Heart right ventricle (tissue), 16 donors: ENCODE measurements at regions of chr7 and their contacts with region 1.

Region 1: DNA sequence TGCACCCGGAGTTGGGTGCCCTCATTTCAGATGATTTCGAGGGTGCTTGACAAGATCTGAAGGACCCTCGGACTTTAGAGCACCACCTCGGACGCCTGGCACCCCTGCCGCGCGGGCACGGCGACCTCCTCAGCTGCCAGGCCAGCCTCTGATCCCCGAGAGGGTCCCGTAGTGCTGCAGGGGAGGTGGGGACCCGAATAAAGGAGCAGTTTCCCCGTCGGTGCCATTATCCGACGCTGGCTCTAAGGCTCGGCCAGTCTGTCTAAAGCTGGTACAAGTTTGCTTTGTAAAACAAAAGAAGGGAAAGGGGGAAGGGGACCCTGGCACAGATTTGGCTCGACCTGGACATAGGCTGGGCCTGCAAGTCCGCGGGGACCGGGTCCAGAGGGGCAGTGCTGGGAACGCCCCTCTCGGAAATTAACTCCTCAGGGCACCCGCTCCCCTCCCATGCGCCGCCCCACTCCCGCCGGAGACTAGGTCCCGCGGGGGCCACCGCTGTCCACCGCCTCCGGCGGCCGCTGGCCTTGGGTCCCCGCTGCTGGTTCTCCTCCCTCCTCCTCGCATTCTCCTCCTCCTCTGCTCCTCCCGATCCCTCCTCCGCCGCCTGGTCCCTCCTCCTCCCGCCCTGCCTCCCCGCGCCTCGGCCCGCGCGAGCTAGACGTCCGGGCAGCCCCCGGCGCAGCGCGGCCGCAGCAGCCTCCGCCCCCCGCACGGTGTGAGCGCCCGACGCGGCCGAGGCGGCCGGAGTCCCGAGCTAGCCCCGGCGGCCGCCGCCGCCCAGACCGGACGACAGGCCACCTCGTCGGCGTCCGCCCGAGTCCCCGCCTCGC is at the start of gene EGFR:
- DNase-seq: peak; percentile 81 to 84
- ATAC-seq: peak; percentile 82 to 92 (median 86)
- H3K4me3 ChIP-seq: peak within 1 kb of the TSS; percentile 64 to 95 (median 76)
- H3K27ac ChIP-seq: peak within 1 kb of the TSS; percentile 83 to 98 (median 94)
- H3K4me1 ChIP-seq: peaks cover 0 to 17% (median 8%) of the 10 kb centered on the region in 9 donors
- H3K27me3 ChIP-seq: peaks cover 0 to 44% (median 24%) of the 10 kb centered on the region in 7 donors
- CTCF ChIP-seq: no peak
- total RNA-seq, gene EGFR: 5.0 to 13.5 (median 9.2) TPM

Region 2: GRCh38 chr7:54728411-54728810 is 290.2 kb before region 1 on chr7:
- intact Hi-C with region 1: no loop called
- DNase-seq: no peak
- ATAC-seq: no peak
- H3K4me3 ChIP-seq: no peak overlapping the region
- H3K27ac ChIP-seq: no peak overlapping the region
- H3K4me1 ChIP-seq: no peaks in the 10 kb centered on the region
- H3K27me3 ChIP-seq: peaks cover 0 to 3% (median 0%) of the 10 kb centered on the region in 7 donors
- CTCF ChIP-seq: no peak

Region 3: GRCh38 chr7:54788664-54789063 is 229.9 kb before region 1 on chr7:
- intact Hi-C with region 1: loop called in 5 of 10 experiments (anchors 5 to 10 kb)
- DNase-seq: peak in 1 of 2 donors; percentile 36
- ATAC-seq: peak; percentile 67 to 93 (median 78)
- H3K4me3 ChIP-seq: no peak overlapping the region
- H3K27ac ChIP-seq: no peak overlapping the region
- H3K4me1 ChIP-seq: peaks cover 0 to 9% (median 6%) of the 10 kb centered on the region in 9 donors
- H3K27me3 ChIP-seq: peaks cover 0 to 7% (median 0%) of the 10 kb centered on the region in 7 donors
- CTCF ChIP-seq: peak; percentile 31 to 83 (median 67)

Region 4: GRCh38 chr7:55048221-55048859 is 29.8 kb after region 1 on chr7:
- intact Hi-C with region 1: no loop called
- DNase-seq: no peak
- ATAC-seq: peak in 5 of 8 donors; percentile 30 to 87 (median 51)
- H3K4me3 ChIP-seq: no peak overlapping the region
- H3K27ac ChIP-seq: no peak overlapping the region
- H3K4me1 ChIP-seq: peaks cover 0 to 40% (median 16%) of the 10 kb centered on the region in 9 donors
- H3K27me3 ChIP-seq: no peaks in the 10 kb centered on the region
- CTCF ChIP-seq: no peak

Region 5: GRCh38 chr7:55086413-55087201 is 68.0 kb after region 1 on chr7:
- intact Hi-C with region 1: loop called in 1 of 10 experiments (anchors 10 kb)
- DNase-seq: no peak
- ATAC-seq: peak; percentile 25 to 60 (median 44)
- H3K4me3 ChIP-seq: peak overlapping the region in 2 of 10 donors; percentile 14 to 28
- H3K27ac ChIP-seq: peak overlapping the region in 9 of 10 donors; percentile 25 to 71 (median 52)
- H3K4me1 ChIP-seq: peaks cover 0 to 58% (median 29%) of the 10 kb centered on the region in 9 donors
- H3K27me3 ChIP-seq: no peaks in the 10 kb centered on the region
- CTCF ChIP-seq: no peak

Region 6: DNA sequence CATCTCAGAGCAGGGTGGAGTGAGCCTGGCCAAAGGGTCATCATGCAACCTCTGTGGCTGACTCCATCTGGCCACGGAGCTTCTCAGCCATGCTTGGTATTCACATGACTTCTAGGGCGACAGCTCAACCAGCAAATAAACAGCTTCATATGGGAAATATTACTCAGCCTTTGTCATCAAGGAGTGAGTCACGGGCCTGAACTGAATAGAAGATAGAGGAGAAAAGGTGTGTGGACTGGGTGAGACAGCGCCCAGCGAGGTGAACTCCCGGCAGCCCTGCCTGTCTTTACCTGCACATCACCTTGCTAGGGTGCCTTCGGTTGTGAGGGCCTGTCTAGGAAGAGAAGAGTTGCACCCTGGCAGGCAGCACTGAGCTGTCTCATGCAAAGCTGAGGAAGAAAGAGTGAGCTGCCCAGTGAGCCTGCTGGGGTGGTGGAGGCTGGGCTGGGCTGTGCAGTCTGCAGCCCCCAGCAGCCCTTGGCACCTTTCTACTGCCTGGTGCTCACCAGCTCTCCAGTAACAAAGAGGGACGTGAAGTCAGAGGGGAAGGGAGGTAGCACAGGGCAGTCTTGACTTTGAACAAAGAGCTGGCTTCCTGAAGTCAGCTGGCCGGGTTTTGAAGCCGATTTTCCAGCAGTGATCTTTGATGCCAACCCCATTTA is 114.4 kb after region 1 on chr7:
- intact Hi-C with region 1: loop called in 4 of 10 experiments (anchors 2 to 10 kb)
- DNase-seq: no peak
- ATAC-seq: peak in 6 of 8 donors; percentile 1 to 27 (median 21)
- H3K4me3 ChIP-seq: no peak overlapping the region
- H3K27ac ChIP-seq: peak overlapping the region; percentile 45 to 88 (median 78)
- H3K4me1 ChIP-seq: peaks cover 22 to 68% (median 57%) of the 10 kb centered on the region in 9 donors
- H3K27me3 ChIP-seq: no peaks in the 10 kb centered on the region
- CTCF ChIP-seq: no peak

Region 7: GRCh38 chr7:55192718-55193117 is 174.1 kb after region 1 on chr7:
- intact Hi-C with region 1: loop called in 2 of 10 experiments (anchors 5 kb)
- DNase-seq: no peak
- ATAC-seq: peak in 3 of 8 donors; percentile 8 to 28 (median 25)
- H3K4me3 ChIP-seq: no peak overlapping the region
- H3K27ac ChIP-seq: peak overlapping the region in 8 of 10 donors; percentile 7 to 68 (median 48)
- H3K4me1 ChIP-seq: peaks cover 9 to 70% (median 26%) of the 10 kb centered on the region in 9 donors
- H3K27me3 ChIP-seq: no peaks in the 10 kb centered on the region
- CTCF ChIP-seq: no peak

Region 8: GRCh38 chr7:55255496-55256435 is 237.2 kb after region 1 on chr7:
- intact Hi-C with region 1: loop called in 7 of 10 experiments (anchors 1 to 10 kb)
- DNase-seq: peak; percentile 71 to 85
- ATAC-seq: peak; percentile 92 to 96 (median 94)
- H3K4me3 ChIP-seq: peak overlapping the region; percentile 46 to 84 (median 60)
- H3K27ac ChIP-seq: peak overlapping the region in 5 of 10 donors; percentile 8 to 65 (median 34)
- H3K4me1 ChIP-seq: peaks cover 0 to 19% (median 11%) of the 10 kb centered on the region in 9 donors
- H3K27me3 ChIP-seq: peaks cover 6 to 55% (median 30%) of the 10 kb centered on the region in 7 donors
- CTCF ChIP-seq: peak; percentile 81 to 97 (median 92)